IMR-90 (cell line): ENCODE measurements at regions of chr9 and their contacts with region 1.

Region 1: GRCh38 chr9:82488313-82489200 is 500.0 kb downstream of the SPATA31D1 start:
- DNase-seq: peak; percentile 88
- ATAC-seq: peak; percentile 73
- H3K4me3 ChIP-seq: no peak overlapping the region
- H3K27ac ChIP-seq: peak overlapping the region; percentile 20; the same call in 1 of the 2 replicates
- H3K4me1 ChIP-seq: peaks cover 5% of the 10 kb centered on the region
- H3K27me3 ChIP-seq: no peaks in the 10 kb centered on the region
- CTCF ChIP-seq: no peak
- POLR2A ChIP-seq: no peak
- RAD21 ChIP-seq: no peak

Region 2: GRCh38 chr9:82382887-82383616 is 105.5 kb before region 1 on chr9:
- CTCF ChIA-PET with region 1: no interaction called
- POLR2A ChIA-PET with region 1: no interaction called
- dilution Hi-C with region 1: no loop called
- in situ Hi-C with region 1: loop called (anchors 25 kb)
- intact Hi-C with region 1: no loop called
- DNase-seq: no peak
- ATAC-seq: no peak
- H3K4me3 ChIP-seq: no peak overlapping the region
- H3K27ac ChIP-seq: no peak overlapping the region
- H3K4me1 ChIP-seq: no peaks in the 10 kb centered on the region
- H3K27me3 ChIP-seq: no peaks in the 10 kb centered on the region
- CTCF ChIP-seq: no peak
- POLR2A ChIP-seq: no peak
- RAD21 ChIP-seq: no peak

Region 3: GRCh38 chr9:82539856-82540579 is 51.5 kb after region 1 on chr9:
- CTCF ChIA-PET with region 1: no interaction called
- POLR2A ChIA-PET with region 1: no interaction called
- dilution Hi-C with region 1: no loop called
- in situ Hi-C with region 1: no loop called
- intact Hi-C with region 1: no loop called
- DNase-seq: no peak
- ATAC-seq: no peak
- H3K4me3 ChIP-seq: no peak overlapping the region
- H3K27ac ChIP-seq: no peak overlapping the region
- H3K4me1 ChIP-seq: no peaks in the 10 kb centered on the region
- H3K27me3 ChIP-seq: no peaks in the 10 kb centered on the region
- CTCF ChIP-seq: no peak
- POLR2A ChIP-seq: no peak
- RAD21 ChIP-seq: no peak